ENCODE measurements at regions of chr2 and their contacts with region 1.

Region 1: GRCh38 chr2:111671426-111672150 is 212.4 kb downstream of the ANAPC1 start:
- DNase-seq: no peak
- H3K4me3 ChIP-seq: no peak overlapping the region
- H3K27ac ChIP-seq: no peak overlapping the region
- H3K27me3 ChIP-seq: no peaks in the 10 kb centered on the region
- CTCF ChIP-seq: no peak

Region 2: DNA sequence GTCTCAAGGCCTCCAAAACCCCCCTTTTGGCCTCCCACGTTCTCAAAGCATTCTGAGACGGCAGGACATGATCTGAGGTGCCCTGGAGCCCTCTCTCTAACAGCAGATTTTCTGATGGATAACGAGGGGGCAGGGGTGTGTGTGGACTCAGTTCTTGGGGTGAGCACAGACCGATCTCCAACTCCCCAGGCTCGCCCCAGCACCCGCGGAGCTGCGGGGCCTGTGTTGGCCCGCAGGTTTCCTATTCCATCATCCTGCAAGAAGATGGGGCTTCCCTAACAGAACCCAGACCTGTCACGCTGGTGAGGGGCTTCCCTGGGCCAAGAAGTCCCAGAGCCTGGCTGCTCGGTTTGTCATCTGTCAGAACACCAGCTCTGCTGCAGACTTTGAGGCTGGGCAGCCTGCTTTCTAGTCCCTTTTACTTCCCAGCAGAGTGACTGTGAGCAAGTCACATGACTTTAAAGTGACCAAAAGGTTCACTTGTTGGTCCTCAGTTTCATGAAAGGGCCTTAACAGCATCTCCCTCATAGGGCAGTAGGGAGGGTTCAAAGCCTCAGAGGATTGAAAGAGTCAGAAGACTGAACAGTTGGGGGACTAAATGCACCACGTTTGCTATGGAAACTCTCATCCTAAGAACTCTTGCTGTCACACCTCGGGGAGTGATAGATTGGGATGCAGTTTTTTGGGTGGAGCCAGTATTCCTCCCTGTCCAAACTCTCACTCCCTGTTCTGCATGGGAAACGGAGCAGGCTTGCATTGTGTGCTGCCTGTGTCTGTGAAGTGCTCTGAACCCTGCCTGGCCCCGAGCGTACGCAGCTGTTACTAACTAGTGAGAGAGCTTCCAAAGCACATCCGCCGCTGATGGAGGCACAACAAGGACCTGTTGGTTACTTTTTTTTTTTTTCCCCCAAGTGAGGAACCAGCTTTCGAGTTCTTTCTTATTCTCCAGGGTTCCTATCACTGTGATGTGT is 16.6 kb after region 1 on chr2:
- CTCF ChIA-PET with region 1: no interaction called
- POLR2A ChIA-PET with region 1: no interaction called
- DNase-seq: no peak
- H3K4me3 ChIP-seq: no peak overlapping the region
- H3K27ac ChIP-seq: no peak overlapping the region
- H3K27me3 ChIP-seq: peaks cover 14% of the 10 kb centered on the region
- CTCF ChIP-seq: no peak

Region 3: GRCh38 chr2:111698743-111699554 is 27.4 kb after region 1 on chr2:
- CTCF ChIA-PET with region 1: interaction called, 4 read pairs
- POLR2A ChIA-PET with region 1: interaction called, 11 read pairs
- DNase-seq: peak; percentile 96
- H3K4me3 ChIP-seq: no peak overlapping the region
- H3K27ac ChIP-seq: peak overlapping the region; percentile 71
- H3K27me3 ChIP-seq: peaks cover 2% of the 10 kb centered on the region
- CTCF ChIP-seq: peak; percentile 48